MCF 10A (cell line): ENCODE measurements at regions of chr5 and their contacts with region 1.

Region 1: DNA sequence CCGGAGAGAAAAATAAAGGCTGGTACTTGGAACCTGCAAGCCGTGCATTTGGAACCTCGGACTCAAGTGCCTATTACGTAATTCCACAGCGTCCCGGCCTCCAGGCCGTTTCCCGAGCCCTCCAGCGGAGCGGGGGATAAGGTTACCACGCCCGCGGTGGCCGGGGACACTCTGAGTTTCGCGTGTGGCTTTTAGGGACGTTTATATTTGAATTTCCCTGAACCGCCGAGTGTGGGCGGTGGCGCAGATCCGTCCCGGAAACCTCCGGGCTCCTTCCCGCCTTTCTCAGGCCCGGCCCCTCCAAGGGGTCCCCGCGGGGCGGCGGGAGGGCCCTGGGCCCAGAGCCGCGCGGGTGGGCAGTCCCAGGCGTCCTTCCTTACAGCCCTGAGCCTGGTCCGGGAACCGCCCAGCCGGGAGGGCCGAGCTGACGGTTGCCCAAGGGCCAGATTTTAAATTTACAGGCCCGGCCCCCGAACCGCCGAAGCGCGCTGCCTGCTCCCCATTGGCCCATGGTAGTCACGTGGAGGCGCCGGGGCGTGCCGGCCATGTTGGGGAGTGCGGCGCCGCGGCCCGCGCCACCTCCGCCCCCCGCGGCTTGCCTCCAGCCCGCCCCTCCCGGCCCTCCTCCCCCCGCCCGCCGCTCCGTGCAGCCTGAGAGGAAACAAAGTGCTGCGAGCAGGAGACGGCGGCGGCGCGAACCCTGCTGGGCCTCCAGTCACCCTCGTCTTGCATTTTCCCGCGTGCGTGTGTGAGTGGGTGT is at the start of gene LMNB1:
- DNase-seq: peak; percentile 98
- H3K4me3 Mint-ChIP-seq: peak within 1 kb of the TSS; percentile 100
- H3K27ac Mint-ChIP-seq: peak within 1 kb of the TSS; percentile 95
- H3K4me1 Mint-ChIP-seq: peaks cover 6% of the 10 kb centered on the region
- H3K27me3 Mint-ChIP-seq: no peaks in the 10 kb centered on the region
- CTCF ChIP-seq: no peak
- total RNA-seq, gene LMNB1: 19.6 and 31.6 TPM in 2 replicates

Region 2: GRCh38 chr5:126594676-126595485 is 181.8 kb before region 1 on chr5 and contains the start of gene ALDH7A1:
- CTCF ChIA-PET with region 1: interaction called, 15 read pairs
- POLR2A ChIA-PET with region 1: interaction called, 26 read pairs
- intact Hi-C with region 1: loop called (anchors 5 kb)
- DNase-seq: peak; percentile 98
- H3K4me3 Mint-ChIP-seq: peak within 1 kb of the TSS; percentile 91
- H3K27ac Mint-ChIP-seq: peak within 1 kb of the TSS; percentile 84
- H3K4me1 Mint-ChIP-seq: peaks cover 36% of the 10 kb centered on the region
- H3K27me3 Mint-ChIP-seq: no peaks in the 10 kb centered on the region
- CTCF ChIP-seq: peak; percentile 40
- total RNA-seq, gene ALDH7A1: 46.8 and 89.1 TPM in 2 replicates

Region 3: GRCh38 chr5:126656396-126657007 is 120.2 kb before region 1 on chr5:
- CTCF ChIA-PET with region 1: interaction called, 149 read pairs
- POLR2A ChIA-PET with region 1: interaction called, 5 read pairs
- intact Hi-C with region 1: loop called (anchors 1 kb)
- DNase-seq: peak; percentile 67
- H3K4me3 Mint-ChIP-seq: no peak overlapping the region
- H3K27ac Mint-ChIP-seq: no peak overlapping the region
- H3K4me1 Mint-ChIP-seq: no peaks in the 10 kb centered on the region
- H3K27me3 Mint-ChIP-seq: no peaks in the 10 kb centered on the region
- CTCF ChIP-seq: peak; percentile 98

Region 4: DNA sequence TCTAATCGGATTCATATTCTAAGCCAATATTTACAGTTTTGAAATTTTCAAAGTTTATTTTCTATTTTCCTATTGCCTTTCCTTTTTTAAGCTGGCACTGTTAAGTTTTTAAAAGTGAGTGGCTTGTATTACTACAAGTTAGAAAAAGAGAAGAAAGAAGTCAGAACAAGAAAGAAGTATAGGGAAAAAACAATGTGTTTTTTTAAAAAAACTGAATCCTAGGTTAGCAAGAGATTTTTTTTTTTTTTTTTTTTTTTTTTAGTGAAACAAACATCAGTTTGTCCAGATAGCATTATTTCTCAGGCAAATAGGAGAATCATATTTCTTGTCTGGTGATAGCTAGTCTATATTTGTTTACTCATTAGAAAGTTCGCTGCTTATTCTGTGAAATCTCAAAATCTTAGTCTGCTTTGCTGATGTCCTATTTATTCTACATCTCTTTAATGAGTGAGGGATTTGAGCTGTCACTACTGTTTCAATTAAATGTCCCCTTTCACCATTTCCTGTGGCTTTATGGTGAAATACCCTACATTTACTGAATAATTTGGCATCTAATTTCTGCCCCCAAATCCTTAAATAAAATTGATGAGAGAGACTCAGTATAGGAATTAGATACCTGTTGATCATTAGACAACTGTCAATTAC is 18.8 kb before region 1 on chr5:
- CTCF ChIA-PET with region 1: interaction called, 10 read pairs
- POLR2A ChIA-PET with region 1: interaction called, 5 read pairs
- intact Hi-C with region 1: no loop called
- DNase-seq: no peak
- H3K4me3 Mint-ChIP-seq: no peak overlapping the region
- H3K27ac Mint-ChIP-seq: no peak overlapping the region
- H3K4me1 Mint-ChIP-seq: no peaks in the 10 kb centered on the region
- H3K27me3 Mint-ChIP-seq: no peaks in the 10 kb centered on the region
- CTCF ChIP-seq: no peak

Region 5: DNA sequence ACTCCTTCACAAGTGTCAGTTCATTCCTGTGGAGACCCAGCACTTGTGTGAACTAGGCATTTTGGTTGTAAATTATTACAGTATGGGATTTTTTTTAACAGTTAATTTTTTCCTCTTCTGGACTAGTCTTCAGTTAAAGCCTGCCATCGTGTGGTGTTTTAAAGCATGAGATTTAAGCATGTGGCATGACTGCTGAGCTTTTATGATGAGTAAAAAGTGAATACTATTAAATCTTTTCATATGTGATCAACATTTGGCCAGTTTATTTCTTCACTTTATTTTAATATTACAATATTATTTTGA is 25.3 kb after region 1 on chr5:
- CTCF ChIA-PET with region 1: interaction called, 154 read pairs
- POLR2A ChIA-PET with region 1: interaction called, 99 read pairs
- intact Hi-C with region 1: loop called (anchors 2 kb)
- DNase-seq: peak; percentile 67
- H3K4me3 Mint-ChIP-seq: peak overlapping the region; percentile 15
- H3K27ac Mint-ChIP-seq: peak overlapping the region; percentile 37
- H3K4me1 Mint-ChIP-seq: peaks cover 35% of the 10 kb centered on the region
- H3K27me3 Mint-ChIP-seq: no peaks in the 10 kb centered on the region
- CTCF ChIP-seq: peak; percentile 70

Region 6: GRCh38 chr5:126920291-126920690 is 143.6 kb after region 1 on chr5:
- CTCF ChIA-PET with region 1: no interaction called
- POLR2A ChIA-PET with region 1: no interaction called
- intact Hi-C with region 1: no loop called
- DNase-seq: no peak
- H3K4me3 Mint-ChIP-seq: no peak overlapping the region
- H3K27ac Mint-ChIP-seq: no peak overlapping the region
- H3K4me1 Mint-ChIP-seq: peaks cover 18% of the 10 kb centered on the region
- H3K27me3 Mint-ChIP-seq: no peaks in the 10 kb centered on the region
- CTCF ChIP-seq: no peak

Region 7: GRCh38 chr5:127492854-127493738 is 716.4 kb after region 1 on chr5:
- CTCF ChIA-PET with region 1: interaction called, 13 read pairs
- POLR2A ChIA-PET with region 1: interaction called, 8 read pairs
- intact Hi-C with region 1: no loop called
- DNase-seq: peak; percentile 75
- H3K4me3 Mint-ChIP-seq: no peak overlapping the region
- H3K27ac Mint-ChIP-seq: no peak overlapping the region
- H3K4me1 Mint-ChIP-seq: no peaks in the 10 kb centered on the region
- H3K27me3 Mint-ChIP-seq: peaks cover 82% of the 10 kb centered on the region
- CTCF ChIP-seq: peak; percentile 95